Calu3 (cell line): ENCODE measurements at regions of chr15 and their contacts with region 1.

Region 1: GRCh38 chr15:64825431-64826294 is at the start of gene PIF1:
- DNase-seq: peak; percentile 92
- H3K4me3 Mint-ChIP-seq: peak within 1 kb of the TSS; percentile 86
- H3K27ac Mint-ChIP-seq: peak within 1 kb of the TSS; percentile 75
- H3K4me1 Mint-ChIP-seq: peaks cover 19% of the 10 kb centered on the region
- H3K27me3 Mint-ChIP-seq: no peaks in the 10 kb centered on the region
- CTCF ChIP-seq: no peak
- total RNA-seq, gene PIF1: 33.9 and 51.5 TPM in 2 replicates

Region 2: DNA sequence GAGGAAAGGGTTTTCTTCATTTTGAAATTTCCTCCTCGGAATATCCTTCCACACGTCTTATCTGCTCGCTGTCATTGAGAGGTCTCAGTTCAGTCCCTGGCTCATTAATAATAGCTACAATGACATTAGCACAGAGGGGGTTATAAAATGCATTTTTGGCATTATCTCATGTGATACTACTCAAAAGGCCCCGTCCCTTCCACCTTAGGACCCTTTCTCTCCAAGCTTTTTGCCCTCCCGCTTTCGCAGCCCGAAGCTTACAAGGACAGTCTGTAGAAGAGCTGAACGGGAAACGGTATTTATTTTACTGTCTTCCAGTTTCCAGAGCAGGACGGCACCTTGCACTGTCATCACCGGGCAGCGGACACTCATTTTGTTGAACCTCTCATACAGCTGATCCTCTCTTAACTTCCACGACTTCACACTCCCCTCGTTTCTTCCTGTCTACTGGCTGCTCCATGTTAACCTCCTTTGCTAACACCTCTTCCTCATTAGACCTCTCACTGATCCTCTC is 10.4 kb after region 1 on chr15:
- CTCF ChIA-PET with region 1: interaction called, 9 read pairs
- intact Hi-C with region 1: loop called (anchors 1 kb)
- DNase-seq: no peak
- H3K4me3 Mint-ChIP-seq: peak overlapping the region; percentile 62
- H3K27ac Mint-ChIP-seq: peak overlapping the region; percentile 37
- H3K4me1 Mint-ChIP-seq: peaks cover 18% of the 10 kb centered on the region
- H3K27me3 Mint-ChIP-seq: peaks cover 32% of the 10 kb centered on the region
- CTCF ChIP-seq: peak; percentile 18